Right ventricle myocardium superior (tissue), 1 donor: ENCODE measurements at regions of chr1 and their contacts with region 1.

Region 1: DNA sequence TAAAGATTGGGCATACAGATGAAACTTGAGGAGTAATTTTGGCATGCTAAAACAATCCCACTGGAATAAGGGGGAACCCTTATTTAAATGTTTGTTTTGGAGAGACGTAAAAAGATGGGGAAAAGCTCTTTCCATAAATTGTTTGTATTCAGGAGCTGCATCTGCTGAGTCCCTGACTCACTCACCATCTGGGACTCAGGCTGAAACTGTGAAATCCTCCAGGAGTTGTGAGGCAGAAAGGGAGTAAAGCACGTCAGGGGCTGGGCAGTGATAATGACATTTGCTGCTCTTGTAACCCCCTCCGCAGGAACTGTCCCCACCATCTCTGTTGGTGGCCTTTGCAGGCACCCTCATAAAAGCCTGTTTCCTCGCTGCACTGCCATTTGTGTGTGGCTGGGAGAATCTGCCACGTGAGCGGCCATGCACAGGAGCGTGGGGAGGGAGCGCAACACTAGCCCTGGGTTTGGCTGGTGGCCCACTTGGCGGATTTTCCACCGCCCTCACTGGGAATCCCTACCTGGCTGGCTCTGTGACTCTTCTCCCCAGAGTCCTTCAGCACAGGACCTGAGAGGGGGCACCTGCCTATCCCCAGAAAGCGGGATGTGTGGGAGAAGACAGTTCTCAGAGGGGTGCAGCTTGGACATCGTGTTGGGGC is 45.3 kb downstream of the ZSCAN20 start:
- DNase-seq: no peak
- ATAC-seq: no peak

Region 2: DNA sequence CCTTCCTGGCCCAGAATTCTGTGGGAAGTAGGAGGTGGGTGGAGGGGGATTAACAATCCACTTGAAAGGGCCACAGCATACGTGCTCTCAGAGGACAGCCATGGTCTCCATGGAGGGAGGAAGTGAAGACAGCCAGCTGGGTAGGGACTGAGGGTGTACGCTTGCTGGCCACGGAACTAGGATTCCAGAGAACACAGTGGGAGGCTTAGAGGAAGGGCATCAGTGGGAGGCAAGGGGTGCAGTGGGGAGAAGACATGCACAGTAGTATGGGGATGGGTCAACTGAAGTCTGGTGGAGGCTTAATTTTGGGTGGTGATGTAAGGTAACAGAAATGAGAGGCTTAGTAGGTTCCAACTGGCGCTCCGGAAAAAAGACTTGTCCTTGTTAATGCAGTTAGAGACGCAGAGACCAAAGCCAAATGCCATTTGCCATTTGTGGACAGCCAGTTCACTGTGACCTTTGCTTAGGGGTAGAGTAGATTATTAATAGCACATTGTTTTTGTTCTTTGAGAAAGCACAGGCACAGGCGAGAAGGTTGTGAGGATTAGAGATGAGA is 57.7 kb after region 1 on chr1:
- intact Hi-C with region 1: loop called (anchors 10 kb)
- DNase-seq: peak; percentile 50
- ATAC-seq: peak; percentile 91